ENCODE measurements at regions of chr3 and their contacts with region 1.

Region 1: GRCh38 chr3:124586887-124587408 is 143.3 kb upstream of the UMPS start:
- DNase-seq: peak in 2 of 4 experiments; percentile 18 to 72
- ATAC-seq: peak; percentile 62
- H3K4me3 ChIP-seq: peak overlapping the region; percentile 39; the same call in 1 of the 2 replicates
- H3K27ac ChIP-seq: peak overlapping the region; percentile 16
- H3K4me1 ChIP-seq: peaks cover 26 to 28% of the 10 kb centered on the region in 2 experiments; a peak in 4 of 5 replicates
- H3K27me3 ChIP-seq: no peaks in the 10 kb centered on the region
- CTCF ChIP-seq: no peak
- EP300 ChIP-seq: no peak
- POLR2A ChIP-seq: no peak
- RAD21 ChIP-seq: no peak

Region 2: DNA sequence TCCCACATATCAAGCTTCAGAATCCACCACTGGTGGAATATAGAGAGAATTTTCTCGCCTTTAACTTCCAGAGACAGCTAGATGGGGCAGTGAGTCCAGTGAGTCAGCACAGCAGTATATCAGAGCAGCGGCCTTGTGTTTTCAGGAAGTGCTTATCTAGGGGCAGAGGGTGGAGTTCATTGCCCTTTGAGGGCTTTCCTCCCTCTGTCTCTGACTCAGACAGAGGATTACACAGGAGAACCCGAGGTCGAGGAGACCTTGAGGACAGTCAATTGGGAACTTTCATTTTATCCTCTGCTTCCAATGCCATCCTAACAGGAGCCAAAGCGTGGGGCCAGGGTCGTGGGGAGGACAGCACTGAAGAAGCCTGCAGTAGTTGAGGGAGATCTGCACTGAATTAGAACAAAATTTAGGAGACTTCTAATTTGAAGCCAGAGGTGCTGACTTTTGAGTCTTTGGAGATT is 33.7 kb after region 1 on chr3:
- CTCF ChIA-PET with region 1: interaction called, 3 read pairs
- POLR2A ChIA-PET with region 1: no interaction called
- in situ Hi-C with region 1: no loop called
- intact Hi-C with region 1: loop called (anchors 1 kb)
- DNase-seq: peak; percentile 66 to 93 (median 75)
- ATAC-seq: peak; percentile 97
- H3K4me3 ChIP-seq: no peak overlapping the region; the same call in 1 of the 2 replicates
- H3K27ac ChIP-seq: peak overlapping the region; percentile 98
- H3K4me1 ChIP-seq: peaks cover 10 to 45% of the 10 kb centered on the region in 2 experiments
- H3K27me3 ChIP-seq: no peaks in the 10 kb centered on the region
- CTCF ChIP-seq: no peak
- EP300 ChIP-seq: peak; percentile 95
- POLR2A ChIP-seq: 0 out of 2 replicates have a peak, but pooled peaks have one; percentile 43
- RAD21 ChIP-seq: peak in 1 of 2 experiments; percentile 24; a peak in 2 of 4 replicates

Measured in K562 (cell line).